Activated B cell treated with CpG ODN at 0.5 μM for 24 hours (primary cell): ENCODE measurements at regions of chr4 and their contacts with region 1.

Region 1: GRCh38 chr4:139229534-139230039 is 50.4 kb downstream of the MGARP start:
- DNase-seq: no peak
- ATAC-seq: peak; percentile 61
- H3K4me3 Mint-ChIP-seq: no peak overlapping the region
- H3K27ac Mint-ChIP-seq: no peak overlapping the region
- H3K4me1 Mint-ChIP-seq: peaks cover 3% of the 10 kb centered on the region
- H3K27me3 Mint-ChIP-seq: no peaks in the 10 kb centered on the region
- CTCF ChIP-seq: no peak

Region 2: DNA sequence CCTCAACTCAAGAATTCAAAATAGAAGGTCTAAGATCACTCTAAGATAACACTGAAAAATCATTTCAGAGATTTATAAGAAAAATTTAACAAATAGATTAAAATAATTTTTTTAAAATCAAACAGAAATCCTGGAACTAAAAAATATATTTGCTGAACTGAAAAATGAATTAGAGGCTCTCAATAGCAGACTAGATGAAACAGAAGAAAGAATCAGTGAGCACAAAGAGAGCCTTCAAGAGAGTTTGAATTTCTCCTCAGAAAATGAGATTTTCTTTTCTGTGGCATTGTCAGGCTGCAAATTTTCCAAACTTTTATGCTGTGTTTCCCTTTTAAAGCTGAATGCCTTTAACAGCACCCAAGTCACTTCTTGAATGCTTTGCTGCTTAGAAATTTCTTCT is 652.4 kb before region 1 on chr4:
- CTCF ChIA-PET with region 1: no interaction called
- POLR2A ChIA-PET with region 1: no interaction called
- intact Hi-C with region 1: no loop called
- DNase-seq: no peak
- ATAC-seq: no peak
- H3K4me3 Mint-ChIP-seq: no peak overlapping the region
- H3K27ac Mint-ChIP-seq: no peak overlapping the region
- H3K4me1 Mint-ChIP-seq: no peaks in the 10 kb centered on the region
- H3K27me3 Mint-ChIP-seq: no peaks in the 10 kb centered on the region
- CTCF ChIP-seq: no peak

Region 3: GRCh38 chr4:139243448-139244365 is 14.1 kb after region 1 on chr4:
- CTCF ChIA-PET with region 1: no interaction called
- POLR2A ChIA-PET with region 1: interaction called, 3 read pairs
- intact Hi-C with region 1: loop called (anchors 1 kb)
- DNase-seq: no peak
- ATAC-seq: no peak
- H3K4me3 Mint-ChIP-seq: no peak overlapping the region
- H3K27ac Mint-ChIP-seq: no peak overlapping the region
- H3K4me1 Mint-ChIP-seq: peaks cover 9% of the 10 kb centered on the region
- H3K27me3 Mint-ChIP-seq: peaks cover 2% of the 10 kb centered on the region
- CTCF ChIP-seq: no peak